Activated naive CD4-positive, alpha-beta T cell treated with anti-CD3 and anti-CD28 coated beads, Interleukin-2, amount 10 ng/mL, durations not matched to agents 7 days and 5 days (primary cell): ENCODE measurements at regions of chr22 and their contacts with region 1.

Region 1: GRCh38 chr22:35418088-35418487 is 18.1 kb downstream of the MCM5 start:
- DNase-seq: no peak
- H3K4me3 Mint-ChIP-seq: no peak overlapping the region
- H3K27ac Mint-ChIP-seq: no peak overlapping the region
- H3K4me1 Mint-ChIP-seq: peaks cover 4% of the 10 kb centered on the region
- H3K27me3 Mint-ChIP-seq: no peaks in the 10 kb centered on the region

Region 2: DNA sequence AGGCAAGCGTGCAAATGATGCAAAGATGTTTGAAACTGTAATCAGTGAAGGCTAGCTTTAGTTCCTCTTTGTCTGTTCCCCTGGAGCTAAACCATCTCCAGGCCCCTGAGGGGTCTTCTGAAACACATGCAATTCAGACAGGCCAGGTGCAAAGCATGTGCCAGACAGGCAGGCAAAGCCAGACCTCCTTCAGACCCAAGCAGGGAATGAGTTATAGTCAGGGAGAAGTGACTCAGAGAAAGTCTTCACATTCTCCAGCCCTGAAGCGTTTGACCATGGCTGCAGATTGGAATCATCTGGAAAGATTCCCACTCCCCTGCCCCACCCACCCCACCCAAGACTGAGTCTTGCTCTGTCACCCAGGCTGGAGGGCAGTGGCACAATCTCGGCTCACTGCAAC is 539.1 kb before region 1 on chr22:
- CTCF ChIA-PET with region 1: no interaction called
- DNase-seq: no peak
- H3K4me3 Mint-ChIP-seq: no peak overlapping the region
- H3K27ac Mint-ChIP-seq: no peak overlapping the region
- H3K4me1 Mint-ChIP-seq: no peaks in the 10 kb centered on the region
- H3K27me3 Mint-ChIP-seq: no peaks in the 10 kb centered on the region

Region 3: GRCh38 chr22:35430897-35431322 is 12.8 kb after region 1 on chr22:
- CTCF ChIA-PET with region 1: interaction called, 10 read pairs
- DNase-seq: peak; percentile 76
- H3K4me3 Mint-ChIP-seq: no peak overlapping the region
- H3K27ac Mint-ChIP-seq: no peak overlapping the region
- H3K4me1 Mint-ChIP-seq: no peaks in the 10 kb centered on the region
- H3K27me3 Mint-ChIP-seq: no peaks in the 10 kb centered on the region